ENCODE measurements at regions of chr9 and their contacts with region 1.

Region 1: DNA sequence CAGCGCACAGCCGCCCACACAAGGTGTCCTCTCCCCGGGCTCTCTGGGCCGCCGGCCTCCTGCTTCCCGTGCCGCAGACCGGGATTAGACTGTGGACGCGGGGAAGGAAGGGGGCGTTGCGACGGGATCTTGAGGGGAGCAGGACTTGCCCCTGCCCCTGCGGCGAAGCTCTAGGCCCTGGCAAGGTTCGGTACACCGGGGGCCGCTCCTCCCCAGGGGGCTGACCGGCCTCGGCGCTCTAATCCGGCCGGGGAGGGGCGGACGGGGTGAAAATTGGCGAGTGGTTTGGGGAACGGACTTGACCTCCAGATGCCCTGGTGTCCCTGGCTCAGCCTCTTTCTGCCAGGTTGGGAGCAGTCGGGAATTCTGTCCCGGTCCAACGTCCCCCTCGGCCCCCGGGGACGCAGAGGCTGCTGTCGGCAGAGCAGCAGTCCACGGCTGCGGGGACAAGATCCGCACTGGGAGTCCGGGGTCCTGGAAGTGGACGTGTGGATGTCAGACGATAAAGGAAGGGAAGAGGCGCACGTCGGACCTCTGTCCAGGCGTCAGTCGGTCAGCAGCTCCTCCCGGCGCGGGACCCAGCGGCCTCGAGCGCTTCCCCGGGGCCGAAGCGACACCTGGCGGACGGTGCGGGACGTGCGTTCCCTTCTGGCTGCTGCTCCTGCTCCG is 1.9 kb upstream of the CNTFR start:
- DNase-seq: peak; percentile 80 to 97
- H3K4me3 ChIP-seq: peak overlapping the region; percentile 31
- CTCF ChIP-seq: peak in 1 of 3 donors; percentile 66
- POLR2A ChIP-seq: no peak

Region 2: GRCh38 chr9:34437006-34437925 is 154.1 kb before region 1 on chr9:
- intact Hi-C with region 1: loop called (anchors 10 kb)
- DNase-seq: peak in 1 of 2 donors; percentile 31
- H3K4me3 ChIP-seq: no peak overlapping the region
- CTCF ChIP-seq: peak in 1 of 3 donors; percentile 34
- POLR2A ChIP-seq: no peak

Region 3: DNA sequence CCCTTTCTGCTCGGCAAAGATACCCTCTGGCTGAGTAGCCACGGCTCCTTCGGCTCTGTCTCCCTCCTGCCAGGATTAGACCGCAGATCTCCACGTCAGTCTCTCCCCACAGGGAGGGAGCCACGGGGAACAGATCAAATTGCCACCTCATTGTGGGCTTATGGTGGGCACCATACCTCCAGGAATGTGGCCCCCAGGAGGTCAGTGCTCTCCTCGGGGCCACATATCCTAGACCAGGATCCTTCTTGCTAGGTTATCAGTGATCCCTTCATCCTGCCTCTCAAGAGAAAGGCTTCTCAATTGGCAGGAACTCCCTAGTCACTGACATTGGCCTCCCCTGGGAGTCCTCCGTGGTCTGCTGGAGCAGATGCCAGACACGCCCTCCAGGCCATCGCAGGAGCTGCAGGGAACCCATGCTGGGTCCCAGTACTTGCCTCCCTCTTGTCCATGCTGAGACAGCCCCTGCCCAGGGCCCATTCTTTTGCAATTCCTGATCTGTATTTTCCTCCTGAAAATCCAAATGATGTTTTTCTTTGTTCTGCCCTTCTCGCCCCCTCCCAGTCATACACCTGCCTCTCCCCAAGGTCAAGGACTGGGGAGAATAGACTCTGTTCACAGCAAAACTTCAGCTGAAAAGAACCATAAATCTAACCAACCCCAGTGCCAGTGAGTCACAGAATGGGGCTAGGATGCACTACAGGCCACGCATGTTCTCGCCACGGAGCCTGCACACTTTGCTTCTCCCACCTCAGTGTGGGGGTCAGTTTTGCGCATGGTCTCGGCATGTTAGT is 37.0 kb before region 1 on chr9:
- intact Hi-C with region 1: loop called (anchors 5 kb)
- DNase-seq: no peak
- H3K4me3 ChIP-seq: no peak overlapping the region
- CTCF ChIP-seq: no peak
- POLR2A ChIP-seq: no peak

Measured in lower leg skin (tissue), 4 donors.